CD4-positive, alpha-beta T cell (primary cell): ENCODE measurements at regions of chr5 and their contacts with region 1.

Region 1: GRCh38 chr5:98639274-98639673 is 134.2 kb upstream of the RGMB start:
- DNase-seq: no peak
- ATAC-seq: no peak
- H3K4me3 ChIP-seq: no peak overlapping the region
- H3K4me3 Mint-ChIP-seq: no peak overlapping the region
- H3K27ac ChIP-seq: no peak overlapping the region
- H3K27ac Mint-ChIP-seq: no peak overlapping the region
- H3K4me1 ChIP-seq: no peaks in the 10 kb centered on the region
- H3K4me1 Mint-ChIP-seq: no peaks in the 10 kb centered on the region
- H3K27me3 ChIP-seq: no peaks in the 10 kb centered on the region
- H3K27me3 Mint-ChIP-seq: peaks cover 11% of the 10 kb centered on the region
- CTCF ChIP-seq: no peak

Region 2: DNA sequence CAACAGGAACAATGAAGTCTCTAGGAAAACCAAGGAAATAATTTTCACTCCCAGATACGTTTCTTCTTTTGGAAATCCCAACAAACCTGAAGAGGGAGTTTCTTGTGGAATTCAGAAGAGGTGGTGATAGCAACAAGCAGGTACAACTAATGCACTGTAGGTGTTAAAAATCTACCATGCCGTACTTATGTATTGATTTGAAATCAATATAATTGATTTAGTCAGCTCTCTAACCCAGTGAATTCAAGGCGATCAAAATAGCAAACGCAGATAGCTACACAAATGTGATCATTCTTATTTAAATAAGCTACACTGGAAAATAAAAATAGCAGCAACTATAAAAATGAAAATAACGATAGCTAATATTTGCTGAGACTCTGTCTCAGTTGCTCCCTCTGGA is 249.1 kb before region 1 on chr5:
- CTCF ChIA-PET with region 1: no interaction called
- POLR2A ChIA-PET with region 1: no interaction called
- intact Hi-C with region 1: no loop called
- DNase-seq: no peak
- ATAC-seq: no peak
- H3K4me3 ChIP-seq: no peak overlapping the region
- H3K4me3 Mint-ChIP-seq: no peak overlapping the region
- H3K27ac ChIP-seq: no peak overlapping the region
- H3K27ac Mint-ChIP-seq: no peak overlapping the region
- H3K4me1 ChIP-seq: no peaks in the 10 kb centered on the region
- H3K4me1 Mint-ChIP-seq: no peaks in the 10 kb centered on the region
- H3K27me3 ChIP-seq: no peaks in the 10 kb centered on the region
- H3K27me3 Mint-ChIP-seq: no peaks in the 10 kb centered on the region
- CTCF ChIP-seq: no peak

Region 3: GRCh38 chr5:98656125-98656792 is 17.0 kb after region 1 on chr5:
- CTCF ChIA-PET with region 1: no interaction called
- POLR2A ChIA-PET with region 1: no interaction called
- intact Hi-C with region 1: loop called in 1 of 2 experiments (anchors 1 kb)
- DNase-seq: no peak
- ATAC-seq: no peak
- H3K4me3 ChIP-seq: no peak overlapping the region
- H3K4me3 Mint-ChIP-seq: no peak overlapping the region
- H3K27ac ChIP-seq: no peak overlapping the region
- H3K27ac Mint-ChIP-seq: no peak overlapping the region
- H3K4me1 ChIP-seq: no peaks in the 10 kb centered on the region
- H3K4me1 Mint-ChIP-seq: no peaks in the 10 kb centered on the region
- H3K27me3 ChIP-seq: no peaks in the 10 kb centered on the region
- H3K27me3 Mint-ChIP-seq: no peaks in the 10 kb centered on the region
- CTCF ChIP-seq: no peak

Region 4: GRCh38 chr5:98705841-98706240 is 66.6 kb after region 1 on chr5:
- CTCF ChIA-PET with region 1: no interaction called
- POLR2A ChIA-PET with region 1: no interaction called
- intact Hi-C with region 1: no loop called
- DNase-seq: no peak
- ATAC-seq: no peak
- H3K4me3 ChIP-seq: no peak overlapping the region
- H3K4me3 Mint-ChIP-seq: no peak overlapping the region
- H3K27ac ChIP-seq: no peak overlapping the region
- H3K27ac Mint-ChIP-seq: no peak overlapping the region
- H3K4me1 ChIP-seq: no peaks in the 10 kb centered on the region
- H3K4me1 Mint-ChIP-seq: no peaks in the 10 kb centered on the region
- H3K27me3 ChIP-seq: no peaks in the 10 kb centered on the region
- H3K27me3 Mint-ChIP-seq: no peaks in the 10 kb centered on the region
- CTCF ChIP-seq: no peak

Region 5: DNA sequence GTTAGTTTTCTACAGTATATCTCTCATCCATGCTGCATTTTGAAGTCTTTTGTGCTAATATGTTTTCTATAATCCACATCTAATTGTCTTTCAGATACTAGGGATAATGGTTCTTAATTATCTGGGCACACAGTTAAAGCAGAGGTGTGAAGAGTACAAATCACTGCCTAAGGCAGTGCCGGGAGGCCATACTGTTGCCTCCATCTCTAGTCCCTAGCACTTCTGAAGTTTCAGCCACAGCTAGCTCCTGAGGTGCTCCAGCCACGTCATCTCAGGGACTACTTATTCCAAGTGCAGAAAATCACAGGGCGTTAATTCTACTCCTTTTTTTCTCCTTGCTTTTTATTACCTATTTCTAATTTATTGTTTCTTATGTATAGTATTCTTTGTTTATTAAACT is 1135.9 kb after region 1 on chr5:
- CTCF ChIA-PET with region 1: no interaction called
- POLR2A ChIA-PET with region 1: no interaction called
- intact Hi-C with region 1: no loop called
- DNase-seq: no peak
- ATAC-seq: no peak
- H3K4me3 ChIP-seq: no peak overlapping the region
- H3K4me3 Mint-ChIP-seq: no peak overlapping the region
- H3K27ac ChIP-seq: no peak overlapping the region
- H3K27ac Mint-ChIP-seq: no peak overlapping the region
- H3K4me1 ChIP-seq: no peaks in the 10 kb centered on the region
- H3K4me1 Mint-ChIP-seq: no peaks in the 10 kb centered on the region
- H3K27me3 ChIP-seq: no peaks in the 10 kb centered on the region
- H3K27me3 Mint-ChIP-seq: no peaks in the 10 kb centered on the region
- CTCF ChIP-seq: no peak